MCF 10A (cell line): ENCODE measurements at regions of chr1 and their contacts with region 1.

Region 1: DNA sequence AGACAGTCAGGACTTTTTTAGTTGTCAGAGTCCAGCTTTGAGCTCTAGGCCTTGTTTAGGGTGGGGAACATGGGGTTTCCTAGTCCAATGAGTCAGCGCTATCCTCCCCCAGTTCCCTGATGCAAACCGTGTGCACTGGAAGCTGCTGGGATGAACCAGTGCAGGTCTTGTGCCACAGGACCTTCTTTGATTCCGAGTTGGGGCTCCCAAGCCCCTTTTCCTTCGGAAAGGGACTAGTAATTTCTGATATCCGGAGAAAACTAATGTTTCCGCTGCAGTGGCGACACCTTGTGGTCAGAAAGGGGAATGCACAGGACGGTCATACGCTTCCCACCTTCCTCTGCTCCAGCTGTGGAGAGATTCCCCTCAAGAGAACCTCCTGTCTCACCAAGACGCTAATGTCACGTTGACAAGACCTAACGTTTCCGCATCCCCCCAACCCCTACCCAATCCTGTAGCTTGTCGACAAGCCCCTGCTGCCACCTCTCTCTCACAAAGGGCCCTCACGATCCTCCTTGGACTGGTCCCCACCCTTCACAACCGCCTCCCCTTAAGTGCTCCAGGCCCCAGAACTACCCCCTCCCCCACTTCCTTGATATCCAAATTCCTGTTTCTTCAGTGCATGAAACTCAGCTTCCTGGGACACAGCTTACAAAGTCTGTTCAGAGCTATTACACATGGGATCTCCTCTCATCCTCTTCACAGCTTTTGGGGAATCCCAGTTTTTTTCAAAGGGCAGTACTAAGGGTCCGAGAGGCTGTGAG is 30.9 kb downstream of the GPA33 start:
- DNase-seq: peak; percentile 79
- H3K4me3 Mint-ChIP-seq: no peak overlapping the region
- H3K27ac Mint-ChIP-seq: no peak overlapping the region
- H3K4me1 Mint-ChIP-seq: peaks cover 5% of the 10 kb centered on the region
- H3K27me3 Mint-ChIP-seq: no peaks in the 10 kb centered on the region
- CTCF ChIP-seq: peak; percentile 99

Region 2: DNA sequence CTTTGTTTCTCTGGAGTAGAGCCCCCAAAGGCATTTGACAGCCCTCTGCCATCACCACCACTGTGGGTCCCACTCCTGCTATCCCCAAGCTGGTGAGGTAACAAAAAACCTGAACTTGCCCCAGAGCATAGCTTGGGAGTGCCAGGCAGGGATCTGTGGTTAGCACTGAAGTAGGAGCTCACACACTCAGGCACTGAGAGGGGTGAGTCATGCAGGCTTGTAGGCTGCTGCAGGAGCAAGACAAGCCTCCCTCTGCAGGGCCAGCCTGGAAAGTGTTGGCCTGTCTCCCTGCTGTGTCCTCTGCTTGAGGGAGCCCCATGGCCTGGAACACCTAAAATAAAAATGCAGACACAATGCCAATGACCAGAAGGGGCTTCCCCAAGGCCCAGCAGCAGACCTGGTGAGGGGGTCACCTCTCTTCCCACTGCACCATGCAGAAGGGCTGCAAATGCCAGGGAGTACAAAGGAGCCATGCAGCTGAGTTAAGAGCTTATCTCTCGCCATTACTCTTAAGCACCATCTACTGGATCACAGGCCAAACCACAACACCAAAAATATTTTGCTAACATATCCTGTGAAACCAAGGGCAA is 328.8 kb before region 1 on chr1:
- CTCF ChIA-PET with region 1: interaction called, 12 read pairs
- POLR2A ChIA-PET with region 1: no interaction called
- intact Hi-C with region 1: no loop called
- DNase-seq: peak; percentile 84
- H3K4me3 Mint-ChIP-seq: no peak overlapping the region
- H3K27ac Mint-ChIP-seq: no peak overlapping the region
- H3K4me1 Mint-ChIP-seq: peaks cover 6% of the 10 kb centered on the region
- H3K27me3 Mint-ChIP-seq: no peaks in the 10 kb centered on the region
- CTCF ChIP-seq: peak; percentile 18

Region 3: GRCh38 chr1:166865931-166866330 is 193.3 kb before region 1 on chr1:
- CTCF ChIA-PET with region 1: interaction called, 67 read pairs
- POLR2A ChIA-PET with region 1: interaction called, 3 read pairs
- intact Hi-C with region 1: no loop called
- DNase-seq: no peak
- H3K4me3 Mint-ChIP-seq: no peak overlapping the region
- H3K27ac Mint-ChIP-seq: no peak overlapping the region
- H3K4me1 Mint-ChIP-seq: peaks cover 25% of the 10 kb centered on the region
- H3K27me3 Mint-ChIP-seq: no peaks in the 10 kb centered on the region
- CTCF ChIP-seq: no peak

Region 4: GRCh38 chr1:166933633-166934032 is 125.6 kb before region 1 on chr1:
- CTCF ChIA-PET with region 1: interaction called, 54 read pairs
- POLR2A ChIA-PET with region 1: no interaction called
- intact Hi-C with region 1: no loop called
- DNase-seq: no peak
- H3K4me3 Mint-ChIP-seq: no peak overlapping the region
- H3K27ac Mint-ChIP-seq: no peak overlapping the region
- H3K4me1 Mint-ChIP-seq: no peaks in the 10 kb centered on the region
- H3K27me3 Mint-ChIP-seq: peaks cover 66% of the 10 kb centered on the region
- CTCF ChIP-seq: no peak

Region 5: GRCh38 chr1:166980818-166981217 is 78.4 kb before region 1 on chr1:
- CTCF ChIA-PET with region 1: interaction called, 76 read pairs
- POLR2A ChIA-PET with region 1: no interaction called
- intact Hi-C with region 1: no loop called
- DNase-seq: peak; percentile 36
- H3K4me3 Mint-ChIP-seq: no peak overlapping the region
- H3K27ac Mint-ChIP-seq: no peak overlapping the region
- H3K4me1 Mint-ChIP-seq: peaks cover 6% of the 10 kb centered on the region
- H3K27me3 Mint-ChIP-seq: peaks cover 30% of the 10 kb centered on the region
- CTCF ChIP-seq: no peak

Region 6: DNA sequence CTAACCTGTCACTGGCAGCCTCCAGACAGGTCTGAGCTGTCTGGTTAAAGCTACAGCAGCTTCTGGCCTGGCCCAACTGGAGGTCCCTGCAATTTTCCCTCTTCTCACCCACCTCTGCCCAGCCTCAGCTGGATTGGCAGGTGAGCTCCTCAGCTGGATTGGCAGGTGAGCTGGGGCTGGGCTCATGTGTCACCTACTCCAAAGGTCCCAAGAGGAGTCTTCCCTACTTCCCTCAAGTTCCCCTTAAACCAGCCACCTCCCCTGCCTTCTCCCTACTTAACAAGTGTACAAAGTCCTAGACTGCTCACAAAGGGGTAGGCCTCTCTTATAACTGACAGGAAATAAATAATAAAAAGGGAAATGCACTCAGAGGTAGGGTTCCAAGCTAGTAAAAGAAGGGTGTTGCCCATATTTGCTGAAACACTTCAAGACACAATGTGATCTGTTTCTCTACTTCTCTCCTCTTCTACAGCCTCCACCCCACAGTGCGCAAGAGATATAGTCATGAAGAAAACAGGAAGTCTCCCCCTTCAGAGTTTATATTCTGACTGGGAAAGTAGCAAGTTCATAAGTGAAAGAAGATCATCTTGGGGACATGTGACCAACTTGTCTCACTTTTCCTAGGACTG is 31.2 kb after region 1 on chr1 and contains the start of gene GPA33:
- CTCF ChIA-PET with region 1: interaction called, 45 read pairs
- POLR2A ChIA-PET with region 1: no interaction called
- intact Hi-C with region 1: no loop called
- DNase-seq: no peak
- H3K4me3 Mint-ChIP-seq: no peak within 1 kb of the TSS
- H3K27ac Mint-ChIP-seq: no peak within 1 kb of the TSS
- H3K4me1 Mint-ChIP-seq: peaks cover 9% of the 10 kb centered on the region
- H3K27me3 Mint-ChIP-seq: no peaks in the 10 kb centered on the region
- CTCF ChIP-seq: no peak
- total RNA-seq, gene GPA33: not detected in 2 replicates

Region 7: GRCh38 chr1:167198518-167199133 is 139.4 kb after region 1 on chr1:
- CTCF ChIA-PET with region 1: no interaction called
- POLR2A ChIA-PET with region 1: no interaction called
- intact Hi-C with region 1: no loop called
- DNase-seq: no peak
- H3K4me3 Mint-ChIP-seq: no peak overlapping the region
- H3K27ac Mint-ChIP-seq: no peak overlapping the region
- H3K4me1 Mint-ChIP-seq: peaks cover 15% of the 10 kb centered on the region
- H3K27me3 Mint-ChIP-seq: no peaks in the 10 kb centered on the region
- CTCF ChIP-seq: no peak

Region 8: GRCh38 chr1:167477986-167478385 is 418.8 kb after region 1 on chr1:
- CTCF ChIA-PET with region 1: interaction called, 16 read pairs
- POLR2A ChIA-PET with region 1: no interaction called
- intact Hi-C with region 1: no loop called
- DNase-seq: no peak
- H3K4me3 Mint-ChIP-seq: no peak overlapping the region
- H3K27ac Mint-ChIP-seq: no peak overlapping the region
- H3K4me1 Mint-ChIP-seq: no peaks in the 10 kb centered on the region
- H3K27me3 Mint-ChIP-seq: no peaks in the 10 kb centered on the region
- CTCF ChIP-seq: no peak